IMR-90 (cell line): ENCODE measurements at regions of chr4 and their contacts with region 1.

Region 1: GRCh38 chr4:52376132-52376704 is 282.9 kb downstream of the USP46 start:
- DNase-seq: peak; percentile 47
- ATAC-seq: peak; percentile 48
- H3K4me3 ChIP-seq: no peak overlapping the region
- H3K27ac ChIP-seq: no peak overlapping the region
- H3K4me1 ChIP-seq: no peaks in the 10 kb centered on the region
- H3K27me3 ChIP-seq: peaks cover 9% of the 10 kb centered on the region
- CTCF ChIP-seq: peak; percentile 66
- POLR2A ChIP-seq: no peak
- RAD21 ChIP-seq: peak; percentile 69

Region 2: GRCh38 chr4:52164116-52164515 is 212.1 kb before region 1 on chr4:
- CTCF ChIA-PET with region 1: no interaction called
- POLR2A ChIA-PET with region 1: no interaction called
- dilution Hi-C with region 1: no loop called
- in situ Hi-C with region 1: no loop called
- intact Hi-C with region 1: no loop called
- DNase-seq: no peak
- ATAC-seq: no peak
- H3K4me3 ChIP-seq: no peak overlapping the region
- H3K27ac ChIP-seq: no peak overlapping the region
- H3K4me1 ChIP-seq: no peaks in the 10 kb centered on the region
- H3K27me3 ChIP-seq: no peaks in the 10 kb centered on the region
- CTCF ChIP-seq: no peak
- POLR2A ChIP-seq: no peak
- RAD21 ChIP-seq: no peak

Region 3: DNA sequence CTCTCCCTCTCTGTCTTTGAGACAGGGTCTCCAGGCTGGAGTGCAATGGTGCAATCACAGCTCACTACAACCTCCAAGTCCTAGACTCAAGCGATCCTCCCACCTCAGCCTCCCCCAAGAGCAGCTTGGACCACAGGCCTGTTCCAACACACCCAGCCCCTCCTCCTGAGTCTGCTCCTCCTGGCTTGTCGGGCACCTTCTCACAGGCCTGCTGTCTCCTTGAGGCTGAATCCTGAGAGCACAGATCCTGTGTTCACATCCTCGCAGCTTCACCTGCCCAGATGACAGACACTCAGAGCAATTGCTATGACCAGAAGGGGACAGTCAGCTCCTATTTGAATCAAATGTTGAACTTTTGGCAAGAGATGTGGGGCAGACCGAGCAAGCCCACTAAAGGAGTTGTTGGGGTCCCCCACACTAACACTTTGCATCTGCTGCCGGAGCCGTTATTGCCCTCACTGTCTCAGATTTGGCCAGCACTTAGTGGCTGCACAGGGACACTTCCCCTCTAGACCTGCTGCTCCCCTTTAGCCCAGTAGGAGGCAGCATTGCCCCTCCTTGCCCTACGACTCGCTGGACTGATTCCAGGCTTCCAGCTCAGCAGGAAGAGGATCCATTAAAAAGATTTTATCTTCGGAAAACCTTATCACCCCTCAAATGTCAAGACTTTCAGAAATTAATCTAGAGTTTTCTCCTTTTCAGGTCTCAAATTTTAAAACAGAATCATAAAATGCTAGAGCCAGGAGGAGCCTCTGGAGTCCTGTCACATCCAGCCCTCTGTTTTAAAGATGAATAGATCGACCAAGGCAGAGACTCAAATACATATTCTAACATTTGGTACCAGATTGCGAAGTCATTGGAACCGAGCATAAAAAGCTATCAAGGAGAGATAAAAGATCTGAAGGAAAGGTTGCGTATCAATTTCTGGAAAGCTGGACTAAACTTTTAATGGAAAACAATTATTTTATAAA is 169.2 kb after region 1 on chr4:
- CTCF ChIA-PET with region 1: interaction called, 7 read pairs
- POLR2A ChIA-PET with region 1: no interaction called
- dilution Hi-C with region 1: no loop called
- in situ Hi-C with region 1: no loop called
- intact Hi-C with region 1: loop called (anchors 5 kb)
- DNase-seq: peak; percentile 65
- ATAC-seq: peak; percentile 95
- H3K4me3 ChIP-seq: no peak overlapping the region
- H3K27ac ChIP-seq: no peak overlapping the region
- H3K4me1 ChIP-seq: no peaks in the 10 kb centered on the region
- H3K27me3 ChIP-seq: no peaks in the 10 kb centered on the region
- CTCF ChIP-seq: peak; percentile 98
- POLR2A ChIP-seq: peak; percentile 53; the same call in 1 of the 2 replicates
- RAD21 ChIP-seq: peak; percentile 99

Region 4: GRCh38 chr4:52664479-52664878 is 288.3 kb after region 1 on chr4:
- CTCF ChIA-PET with region 1: no interaction called
- POLR2A ChIA-PET with region 1: no interaction called
- dilution Hi-C with region 1: no loop called
- in situ Hi-C with region 1: loop called (anchors 10 kb)
- intact Hi-C with region 1: loop called (anchors 1 kb)
- DNase-seq: no peak
- ATAC-seq: no peak
- H3K4me3 ChIP-seq: no peak overlapping the region
- H3K27ac ChIP-seq: no peak overlapping the region
- H3K4me1 ChIP-seq: no peaks in the 10 kb centered on the region
- H3K27me3 ChIP-seq: no peaks in the 10 kb centered on the region; the same call in 1 of the 2 replicates
- CTCF ChIP-seq: no peak
- POLR2A ChIP-seq: no peak
- RAD21 ChIP-seq: no peak

Region 5: GRCh38 chr4:52861879-52862616 is 485.8 kb after region 1 on chr4 and contains the start of gene RASL11B:
- CTCF ChIA-PET with region 1: no interaction called
- POLR2A ChIA-PET with region 1: no interaction called
- dilution Hi-C with region 1: no loop called
- in situ Hi-C with region 1: no loop called
- intact Hi-C with region 1: loop called (anchors 10 kb)
- DNase-seq: peak; percentile 52
- ATAC-seq: peak; percentile 98
- H3K4me3 ChIP-seq: peak within 1 kb of the TSS; percentile 89
- H3K27ac ChIP-seq: peak within 1 kb of the TSS; percentile 55; the same call in 1 of the 2 replicates
- H3K4me1 ChIP-seq: peaks cover 9% of the 10 kb centered on the region
- H3K27me3 ChIP-seq: peaks cover 8% of the 10 kb centered on the region
- CTCF ChIP-seq: no peak; the same call in 1 of the 2 replicates
- POLR2A ChIP-seq: no peak; the same call in 1 of the 2 replicates
- RAD21 ChIP-seq: no peak
- total RNA-seq, gene RASL11B: 0.18 and 0.28 TPM in 2 replicates

Region 6: DNA sequence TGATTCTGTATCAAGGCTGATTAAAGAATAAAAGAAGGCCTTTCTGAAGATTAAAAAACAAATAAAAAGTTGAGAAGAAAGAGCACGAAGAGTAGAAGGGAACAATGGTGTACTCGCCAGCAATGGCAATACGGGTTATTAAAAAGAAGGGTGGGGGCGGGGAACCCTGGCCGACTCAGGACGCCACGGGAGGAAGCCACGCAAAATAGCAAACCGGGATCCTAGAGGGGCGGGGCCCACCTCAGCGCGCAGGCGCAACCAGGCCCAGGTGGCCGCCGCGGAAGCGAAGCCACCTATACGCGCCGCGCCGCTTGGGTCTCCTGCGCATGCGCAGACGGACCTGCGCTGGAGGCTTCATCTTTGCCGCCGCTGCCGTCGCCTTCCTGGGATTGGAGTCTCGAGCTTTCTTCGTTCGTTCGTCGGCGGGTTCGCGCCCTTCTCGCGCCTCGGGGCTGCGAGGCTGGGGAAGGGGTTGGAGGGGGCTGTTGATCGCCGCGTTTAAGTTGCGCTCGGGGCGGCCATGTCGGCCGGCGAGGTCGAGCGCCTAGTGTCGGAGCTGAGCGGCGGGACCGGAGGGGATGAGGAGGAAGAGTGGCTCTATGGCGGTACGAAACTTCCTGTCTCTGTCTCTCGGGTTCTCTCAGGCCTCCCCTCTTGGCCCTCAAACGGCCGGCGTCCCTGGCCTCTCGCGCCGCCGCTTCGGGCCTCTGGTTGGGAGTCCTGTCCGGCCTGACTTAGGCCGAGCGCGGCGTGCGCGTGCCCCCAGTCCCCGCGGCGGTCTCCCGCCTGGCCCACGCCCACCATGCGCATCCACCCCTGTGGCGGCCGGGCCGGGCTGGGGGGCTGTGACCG is 1001.3 kb after region 1 on chr4 and contains the start of gene FIP1L1:
- CTCF ChIA-PET with region 1: no interaction called
- POLR2A ChIA-PET with region 1: no interaction called
- dilution Hi-C with region 1: no loop called
- in situ Hi-C with region 1: loop called (anchors 10 kb)
- intact Hi-C with region 1: no loop called
- DNase-seq: peak; percentile 87
- ATAC-seq: peak; percentile 96
- H3K4me3 ChIP-seq: peak within 1 kb of the TSS; percentile 93
- H3K27ac ChIP-seq: peak within 1 kb of the TSS; percentile 95
- H3K4me1 ChIP-seq: no peaks in the 10 kb centered on the region; the same call in 1 of the 2 replicates
- H3K27me3 ChIP-seq: no peaks in the 10 kb centered on the region
- CTCF ChIP-seq: no peak
- POLR2A ChIP-seq: peak; percentile 74
- RAD21 ChIP-seq: no peak
- total RNA-seq, gene FIP1L1: 37.5 and 48.9 TPM in 2 replicates